ENCODE measurements at regions of chr6 and their contacts with region 1.

Region 1: GRCh38 chr6:107847844-107848802 is 24.0 kb upstream of the SCML4 start:
- DNase-seq: peak; percentile 76
- H3K4me3 Mint-ChIP-seq: peak overlapping the region; percentile 69
- H3K27ac Mint-ChIP-seq: no peak overlapping the region
- H3K4me1 Mint-ChIP-seq: no peaks in the 10 kb centered on the region
- H3K27me3 Mint-ChIP-seq: no peaks in the 10 kb centered on the region
- CTCF ChIP-seq: peak; percentile 90

Region 2: GRCh38 chr6:107666084-107666981 is 181.8 kb before region 1 on chr6:
- CTCF ChIA-PET with region 1: interaction called, 19 read pairs
- POLR2A ChIA-PET with region 1: no interaction called
- intact Hi-C with region 1: no loop called
- DNase-seq: no peak
- H3K4me3 Mint-ChIP-seq: no peak overlapping the region
- H3K27ac Mint-ChIP-seq: no peak overlapping the region
- H3K4me1 Mint-ChIP-seq: no peaks in the 10 kb centered on the region
- H3K27me3 Mint-ChIP-seq: peaks cover 35% of the 10 kb centered on the region
- CTCF ChIP-seq: no peak

Region 3: DNA sequence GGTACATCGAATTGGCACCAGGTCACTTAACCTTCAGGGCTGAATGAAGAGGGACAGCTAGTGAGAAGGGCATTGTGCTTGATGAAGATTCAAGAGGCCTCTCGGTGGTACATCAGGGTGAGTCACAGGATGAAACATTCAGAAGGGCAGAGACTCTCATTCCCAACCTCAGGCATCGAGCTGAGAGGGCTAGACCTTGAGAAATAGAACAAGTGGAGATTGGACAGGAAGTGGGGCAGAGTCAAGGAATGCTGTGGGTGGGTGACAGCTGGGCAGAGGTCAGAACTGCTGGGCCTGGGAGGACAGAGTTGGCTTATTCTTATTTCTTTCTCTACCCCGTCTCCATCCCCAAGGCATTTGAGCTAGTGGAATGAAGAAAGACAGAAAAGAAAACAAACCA is 150.0 kb before region 1 on chr6:
- CTCF ChIA-PET with region 1: interaction called, 15 read pairs
- POLR2A ChIA-PET with region 1: no interaction called
- intact Hi-C with region 1: no loop called
- DNase-seq: peak; percentile 80
- H3K4me3 Mint-ChIP-seq: no peak overlapping the region
- H3K27ac Mint-ChIP-seq: no peak overlapping the region
- H3K4me1 Mint-ChIP-seq: peaks cover 10% of the 10 kb centered on the region
- H3K27me3 Mint-ChIP-seq: no peaks in the 10 kb centered on the region
- CTCF ChIP-seq: no peak

Region 4: DNA sequence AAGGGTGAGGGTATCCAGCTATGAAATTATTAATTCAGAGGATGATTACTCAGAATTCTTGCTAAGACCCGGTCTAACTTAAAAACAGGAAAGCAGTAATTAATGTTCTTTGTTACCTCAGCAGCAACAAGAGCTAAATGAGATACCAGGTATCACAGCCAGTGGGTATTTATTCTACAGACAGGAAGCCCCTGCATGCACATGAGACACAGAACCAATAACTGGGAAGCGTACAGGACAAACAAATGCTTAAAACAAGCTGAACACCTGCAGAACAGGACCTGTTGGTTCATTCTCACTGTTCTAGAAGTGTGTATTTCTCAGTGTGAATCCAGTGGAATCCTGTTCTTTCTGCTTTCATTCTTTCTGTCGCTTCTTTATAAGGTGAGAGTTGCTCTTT is 54.9 kb before region 1 on chr6:
- CTCF ChIA-PET with region 1: interaction called, 11 read pairs
- POLR2A ChIA-PET with region 1: no interaction called
- intact Hi-C with region 1: no loop called
- DNase-seq: no peak
- H3K4me3 Mint-ChIP-seq: no peak overlapping the region
- H3K27ac Mint-ChIP-seq: no peak overlapping the region
- H3K4me1 Mint-ChIP-seq: no peaks in the 10 kb centered on the region
- H3K27me3 Mint-ChIP-seq: peaks cover 71% of the 10 kb centered on the region
- CTCF ChIP-seq: no peak

Region 5: GRCh38 chr6:107806691-107807090 is 41.4 kb before region 1 on chr6:
- CTCF ChIA-PET with region 1: interaction called, 32 read pairs
- POLR2A ChIA-PET with region 1: no interaction called
- intact Hi-C with region 1: loop called (anchors 2 kb)
- DNase-seq: peak; percentile 34
- H3K4me3 Mint-ChIP-seq: no peak overlapping the region
- H3K27ac Mint-ChIP-seq: no peak overlapping the region
- H3K4me1 Mint-ChIP-seq: no peaks in the 10 kb centered on the region
- H3K27me3 Mint-ChIP-seq: no peaks in the 10 kb centered on the region
- CTCF ChIP-seq: no peak

Region 6: GRCh38 chr6:107820338-107821261 is 27.5 kb before region 1 on chr6:
- CTCF ChIA-PET with region 1: interaction called, 32 read pairs
- POLR2A ChIA-PET with region 1: interaction called, 6 read pairs
- intact Hi-C with region 1: no loop called
- DNase-seq: peak; percentile 59
- H3K4me3 Mint-ChIP-seq: peak overlapping the region; percentile 69
- H3K27ac Mint-ChIP-seq: peak overlapping the region; percentile 73
- H3K4me1 Mint-ChIP-seq: peaks cover 32% of the 10 kb centered on the region
- H3K27me3 Mint-ChIP-seq: no peaks in the 10 kb centered on the region
- CTCF ChIP-seq: no peak

Region 7: GRCh38 chr6:107866606-107867301 is 18.6 kb after region 1 on chr6:
- CTCF ChIA-PET with region 1: interaction called, 18 read pairs
- POLR2A ChIA-PET with region 1: interaction called, 3 read pairs
- intact Hi-C with region 1: no loop called
- DNase-seq: peak; percentile 60
- H3K4me3 Mint-ChIP-seq: no peak overlapping the region
- H3K27ac Mint-ChIP-seq: no peak overlapping the region
- H3K4me1 Mint-ChIP-seq: peaks cover 4% of the 10 kb centered on the region
- H3K27me3 Mint-ChIP-seq: no peaks in the 10 kb centered on the region
- CTCF ChIP-seq: peak; percentile 42

Measured in MCF 10A (cell line).